ENCODE measurements at regions of chr14 and their contacts with region 1.

Region 1: GRCh38 chr14:53278930-53279506 is 125.9 kb upstream of the DDHD1 start:
- DNase-seq: no peak
- CTCF ChIP-seq: no peak

Region 2: GRCh38 chr14:53306267-53306721 is 27.3 kb after region 1 on chr14:
- CTCF ChIA-PET with region 1: interaction called, 13 read pairs
- POLR2A ChIA-PET with region 1: no interaction called
- DNase-seq: peak; percentile 38
- CTCF ChIP-seq: peak; percentile 55